ENCODE measurements at regions of chr2 and their contacts with region 1.

Region 1: DNA sequence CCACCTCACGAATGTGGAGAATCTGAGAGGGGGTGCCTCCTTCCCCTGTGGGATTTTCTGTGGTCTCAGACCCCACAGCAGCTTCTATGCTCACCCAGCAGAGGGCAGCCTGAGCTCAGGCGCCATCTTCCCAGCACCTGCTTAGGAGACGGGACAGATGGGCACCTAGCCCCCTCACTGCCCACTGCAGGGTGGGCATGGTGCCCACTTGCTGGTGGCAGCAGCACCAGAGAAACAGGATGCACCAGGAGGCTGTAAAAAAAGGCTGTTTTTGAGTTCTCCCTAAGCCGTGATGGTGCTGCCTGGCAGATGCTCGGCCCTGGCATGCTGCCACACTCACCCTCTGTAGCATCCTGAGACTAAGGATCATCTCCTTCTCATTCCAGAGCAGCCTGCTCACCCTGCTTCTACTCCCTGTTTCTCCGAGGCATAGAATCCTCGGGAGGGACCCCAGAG is 19.1 kb upstream of the SLC20A1 start:
- DNase-seq: peak; percentile 50
- H3K27ac ChIP-seq: peak overlapping the region; percentile 99
- CTCF ChIP-seq: peak; percentile 83

Region 2: DNA sequence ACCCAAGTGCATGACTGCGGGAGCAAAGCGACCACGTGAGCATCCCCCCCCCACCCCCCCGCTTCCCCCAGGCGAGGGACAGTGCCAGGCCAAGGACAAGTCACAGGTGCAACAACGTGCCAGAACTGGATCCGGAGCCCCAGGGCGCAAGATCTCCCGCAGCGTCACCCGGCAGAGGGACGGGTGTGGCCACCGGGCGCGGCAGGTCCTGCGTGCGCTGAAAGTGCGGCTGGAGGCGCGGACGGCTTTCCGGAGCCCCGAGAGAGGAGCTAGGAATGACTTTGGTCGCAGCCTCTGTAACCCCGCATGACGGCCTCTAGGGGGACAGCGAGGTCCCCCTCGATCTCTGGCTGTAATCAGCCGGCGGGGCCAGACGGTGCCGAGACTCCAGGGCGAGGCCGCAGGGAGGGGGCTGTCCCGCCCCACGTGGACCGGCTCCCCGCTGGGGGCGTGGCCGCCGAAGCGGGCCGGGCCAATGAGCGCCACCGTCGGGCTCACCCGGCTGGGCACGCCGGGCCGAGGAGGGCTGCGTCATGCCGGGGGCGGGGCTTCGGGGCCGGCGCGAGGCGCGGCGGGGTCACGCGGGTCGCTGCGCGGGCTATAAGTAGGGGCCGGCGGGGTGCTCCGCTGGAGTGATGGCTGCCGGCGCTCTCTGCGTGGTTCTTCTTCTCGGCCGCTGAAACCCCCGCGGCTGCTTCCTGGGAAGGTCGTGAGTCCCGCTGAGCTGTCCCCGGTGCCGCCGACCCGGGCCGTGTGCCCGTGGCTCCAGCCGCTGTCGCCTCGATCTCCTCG is 18.9 kb after region 1 on chr2 and contains the start of gene SLC20A1:
- CTCF ChIA-PET with region 1: interaction called, 7 read pairs
- POLR2A ChIA-PET with region 1: interaction called, 11 read pairs
- DNase-seq: peak; percentile 96
- H3K27ac ChIP-seq: peak within 1 kb of the TSS; percentile 95
- CTCF ChIP-seq: peak; percentile 46

Measured in RWPE1 (cell line).